Activated T-helper 1 cell treated with anti-CD3 and anti-CD28 coated beads, Interleukin-12 subunit alpha, Interleukin-12 subunit beta, Interleukin-2, Interleukin-4 antibody, amounts not matched to agents 30 ng/mL and 10 ng/mL and 1 ng/mL, durations not matched to agents 14 hours and 24 hours and 36 hours (primary cell): ENCODE measurements at regions of chr9 and their contacts with region 1.

Region 1: GRCh38 chr9:36151316-36152210 is 15.0 kb downstream of the GLIPR2 start:
- DNase-seq: peak; percentile 84
- H3K4me3 Mint-ChIP-seq: peak overlapping the region; percentile 77
- H3K27ac Mint-ChIP-seq: peak overlapping the region; percentile 96
- H3K4me1 Mint-ChIP-seq: peaks cover 64% of the 10 kb centered on the region
- H3K27me3 Mint-ChIP-seq: no peaks in the 10 kb centered on the region

Region 2: GRCh38 chr9:36102742-36103495 is 48.6 kb before region 1 on chr9:
- intact Hi-C with region 1: loop called (anchors 1 kb)
- DNase-seq: peak; percentile 75
- H3K4me3 Mint-ChIP-seq: no peak overlapping the region
- H3K27ac Mint-ChIP-seq: no peak overlapping the region
- H3K4me1 Mint-ChIP-seq: peaks cover 8% of the 10 kb centered on the region
- H3K27me3 Mint-ChIP-seq: peaks cover 2% of the 10 kb centered on the region